HCT116 (cell line): ENCODE measurements at regions of chr11 and their contacts with region 1.

Region 1: DNA sequence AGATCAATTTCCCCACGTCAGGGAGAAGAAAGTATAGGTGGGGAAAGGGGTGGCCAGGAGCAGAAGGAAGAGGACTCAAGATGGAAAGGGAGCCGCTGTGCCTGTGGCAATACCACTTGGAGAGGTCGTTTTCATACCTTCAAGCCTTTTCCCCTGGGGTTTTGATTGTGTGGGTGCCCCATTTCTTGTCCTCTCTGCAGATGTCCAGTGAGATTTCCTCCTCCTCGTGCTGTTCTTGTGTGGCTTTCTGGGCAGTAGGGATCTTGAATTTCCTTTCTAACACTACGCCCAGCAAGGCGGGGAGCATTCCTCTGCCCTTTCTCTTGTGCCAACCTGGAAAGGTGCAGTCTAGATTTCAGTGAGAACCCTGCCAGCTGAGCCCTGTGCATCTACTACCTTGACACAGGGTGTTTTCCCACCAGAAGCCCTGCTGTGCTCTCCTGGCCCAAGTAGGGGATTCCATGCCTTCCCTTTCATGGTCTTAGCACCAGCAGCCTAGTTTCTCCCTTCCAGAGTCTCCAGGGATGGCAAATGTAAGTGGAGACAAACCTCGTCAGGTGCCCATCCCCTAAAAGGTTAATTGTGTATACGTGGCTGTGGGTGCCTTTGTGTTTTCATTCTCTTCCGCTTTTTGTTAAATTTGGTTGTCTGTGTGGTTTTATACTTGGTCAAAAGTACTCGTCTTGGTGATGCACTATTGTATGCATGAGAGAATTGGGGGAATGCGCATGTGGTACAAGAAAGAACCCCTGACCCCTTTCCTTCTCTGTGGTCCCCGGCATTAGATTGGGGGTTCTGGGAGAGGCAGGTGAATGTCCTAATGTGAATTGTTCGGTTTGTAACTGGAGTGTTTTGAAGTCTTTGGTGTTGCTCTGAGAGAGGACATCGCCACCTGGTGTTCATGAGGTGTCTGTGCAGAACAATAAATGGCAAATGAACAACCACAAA is 71.4 kb upstream of the MPEG1 start:
- DNase-seq: peak; percentile 29
- ATAC-seq: peak; percentile 78
- H3K4me3 ChIP-seq: no peak overlapping the region
- H3K27ac ChIP-seq: no peak overlapping the region
- H3K4me1 ChIP-seq: no peaks in the 10 kb centered on the region
- H3K27me3 ChIP-seq: peaks cover 17% of the 10 kb centered on the region; the same call in 1 of the 2 replicates
- CTCF ChIP-seq: peak; percentile 62 to 80 (median 78); a peak in 5 of 6 replicates
- POLR2A ChIP-seq: no peak
- RAD21 ChIP-seq: peak; percentile 65

Region 2: GRCh38 chr11:59263225-59263894 is 20.7 kb before region 1 on chr11:
- CTCF ChIA-PET with region 1: interaction called, 3 read pairs
- POLR2A ChIA-PET with region 1: no interaction called
- RAD21 ChIA-PET with region 1: no interaction called
- intact Hi-C with region 1: loop called (anchors 1 kb)
- DNase-seq: peak; percentile 7
- ATAC-seq: peak; percentile 84
- H3K4me3 ChIP-seq: no peak overlapping the region
- H3K27ac ChIP-seq: no peak overlapping the region
- H3K4me1 ChIP-seq: peaks cover 7 to 8% of the 10 kb centered on the region in 2 experiments
- H3K27me3 ChIP-seq: no peaks in the 10 kb centered on the region
- CTCF ChIP-seq: peak; percentile 32 to 57 (median 52); a peak in 5 of 6 replicates
- POLR2A ChIP-seq: no peak
- RAD21 ChIP-seq: peak; percentile 72